Lower leg skin (tissue), 4 donors: ENCODE measurements at regions of chr13 and their contacts with region 1.

Region 1: GRCh38 chr13:22964245-22964966 is 216.4 kb upstream of the SGCG start:
- DNase-seq: peak; percentile 10 to 81
- H3K4me3 ChIP-seq: no peak overlapping the region
- CTCF ChIP-seq: no peak
- POLR2A ChIP-seq: no peak

Region 2: DNA sequence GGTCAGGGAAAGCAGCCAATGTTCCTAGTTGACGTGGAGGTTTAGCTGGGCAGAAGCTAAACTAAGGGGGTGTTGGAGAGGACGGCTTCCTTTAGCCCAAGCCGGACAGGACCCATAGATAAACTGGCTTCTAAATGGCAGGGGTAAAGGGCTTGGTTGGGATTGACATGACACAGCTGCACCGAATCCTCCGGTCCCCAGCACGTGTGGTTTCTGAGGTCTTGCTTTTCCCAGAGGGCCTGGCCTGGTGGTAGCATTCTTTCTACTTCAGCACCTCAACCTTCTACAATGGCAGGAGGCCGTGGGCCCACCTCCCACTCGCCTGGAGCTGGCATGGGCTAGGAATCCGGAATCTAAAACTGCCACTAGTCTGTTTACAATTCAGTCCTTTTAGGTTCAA is 1130.5 kb before region 1 on chr13:
- intact Hi-C with region 1: no loop called
- DNase-seq: no peak
- H3K4me3 ChIP-seq: no peak overlapping the region
- CTCF ChIP-seq: no peak
- POLR2A ChIP-seq: no peak

Region 3: GRCh38 chr13:24386816-24387719 is 1422.7 kb after region 1 on chr13:
- intact Hi-C with region 1: loop called (anchors 5 kb)
- DNase-seq: no peak
- H3K4me3 ChIP-seq: no peak overlapping the region
- CTCF ChIP-seq: no peak
- POLR2A ChIP-seq: no peak